SK-N-SH (cell line): ENCODE measurements at regions of chr19 and their contacts with region 1.

Region 1: DNA sequence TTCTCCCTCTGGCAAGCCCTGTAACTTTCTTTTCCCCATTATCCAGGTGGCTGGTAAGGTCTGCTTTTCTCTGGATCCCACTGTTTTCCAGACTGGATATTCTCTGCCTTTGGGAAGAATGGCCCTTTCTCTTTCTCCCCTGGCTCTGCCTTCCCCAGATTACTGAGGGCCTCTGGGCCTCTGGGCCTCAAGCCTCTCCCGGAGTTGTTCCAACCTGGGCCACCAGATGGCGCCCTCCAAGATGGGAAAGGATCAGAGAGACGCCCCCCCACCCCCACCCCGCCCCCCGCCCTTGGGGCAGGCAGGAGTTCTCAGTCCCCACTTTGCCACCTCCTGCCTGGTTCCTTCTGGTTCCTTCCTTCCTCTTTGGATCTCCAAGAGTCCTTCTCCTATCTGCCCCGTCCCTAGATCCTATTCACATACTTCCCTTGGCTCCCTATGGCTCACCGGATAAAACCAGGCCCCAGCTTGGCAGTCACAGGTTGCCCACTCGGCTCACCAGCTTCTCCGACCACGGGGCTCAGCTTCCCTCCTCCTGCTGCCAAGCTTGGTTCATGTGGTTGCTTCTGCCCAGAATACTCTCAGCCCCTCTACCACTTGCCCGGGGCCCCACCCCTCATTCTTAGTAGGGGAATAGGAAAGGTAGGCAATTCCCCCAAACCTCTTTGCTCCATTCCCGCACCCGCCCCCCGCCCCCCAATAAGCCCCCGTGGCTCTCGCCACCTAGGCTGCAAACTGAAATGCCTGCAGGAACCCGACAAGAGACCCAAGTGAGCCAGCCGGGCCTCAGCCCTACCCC is 13.1 kb downstream of the EPS8L1 start:
- DNase-seq: peak; percentile 92
- H3K4me3 ChIP-seq: no peak overlapping the region
- H3K27ac ChIP-seq: no peak overlapping the region; a peak in 1 of 4 replicates
- H3K4me1 ChIP-seq: peaks cover 5 to 18% of the 10 kb centered on the region in 2 experiments; a peak in 1 of 4 replicates
- H3K27me3 ChIP-seq: no peaks in the 10 kb centered on the region
- CTCF ChIP-seq: peak; percentile 63
- EP300 ChIP-seq: no peak
- RAD21 ChIP-seq: peak; percentile 37

Region 2: GRCh38 chr19:55099533-55100506 is 11.1 kb after region 1 on chr19:
- CTCF ChIA-PET with region 1: interaction called, 14 read pairs
- POLR2A ChIA-PET with region 1: no interaction called
- DNase-seq: no peak
- H3K4me3 ChIP-seq: no peak overlapping the region
- H3K27ac ChIP-seq: no peak overlapping the region
- H3K4me1 ChIP-seq: no peaks in the 10 kb centered on the region
- H3K27me3 ChIP-seq: no peaks in the 10 kb centered on the region
- CTCF ChIP-seq: peak; percentile 32
- EP300 ChIP-seq: no peak
- RAD21 ChIP-seq: peak; percentile 28; the same call in 1 of the 2 replicates

Region 3: GRCh38 chr19:55106591-55106990 is 17.8 kb after region 1 on chr19:
- CTCF ChIA-PET with region 1: interaction called, 15 read pairs
- POLR2A ChIA-PET with region 1: no interaction called
- DNase-seq: no peak
- H3K4me3 ChIP-seq: no peak overlapping the region
- H3K27ac ChIP-seq: no peak overlapping the region
- H3K4me1 ChIP-seq: no peaks in the 10 kb centered on the region
- H3K27me3 ChIP-seq: no peaks in the 10 kb centered on the region
- CTCF ChIP-seq: no peak
- EP300 ChIP-seq: no peak
- RAD21 ChIP-seq: no peak

Region 4: GRCh38 chr19:55117636-55118391 is 29.1 kb after region 1 on chr19 and contains the start of gene PPP1R12C:
- CTCF ChIA-PET with region 1: interaction called, 38 read pairs
- POLR2A ChIA-PET with region 1: no interaction called
- DNase-seq: peak; percentile 99
- H3K4me3 ChIP-seq: peak within 1 kb of the TSS; percentile 67 to 87
- H3K27ac ChIP-seq: peak within 1 kb of the TSS; percentile 76 to 82
- H3K4me1 ChIP-seq: peaks cover 9 to 27% of the 10 kb centered on the region in 2 experiments; a peak in 3 of 4 replicates
- H3K27me3 ChIP-seq: peaks cover under 1% of the 10 kb centered on the region; the same call in 1 of the 2 replicates
- CTCF ChIP-seq: no peak
- EP300 ChIP-seq: no peak; a peak in 1 of 4 replicates
- RAD21 ChIP-seq: no peak
- polyA plus RNA-seq, gene PPP1R12C: 83.9 and 87.3 TPM in 2 replicates

Region 5: DNA sequence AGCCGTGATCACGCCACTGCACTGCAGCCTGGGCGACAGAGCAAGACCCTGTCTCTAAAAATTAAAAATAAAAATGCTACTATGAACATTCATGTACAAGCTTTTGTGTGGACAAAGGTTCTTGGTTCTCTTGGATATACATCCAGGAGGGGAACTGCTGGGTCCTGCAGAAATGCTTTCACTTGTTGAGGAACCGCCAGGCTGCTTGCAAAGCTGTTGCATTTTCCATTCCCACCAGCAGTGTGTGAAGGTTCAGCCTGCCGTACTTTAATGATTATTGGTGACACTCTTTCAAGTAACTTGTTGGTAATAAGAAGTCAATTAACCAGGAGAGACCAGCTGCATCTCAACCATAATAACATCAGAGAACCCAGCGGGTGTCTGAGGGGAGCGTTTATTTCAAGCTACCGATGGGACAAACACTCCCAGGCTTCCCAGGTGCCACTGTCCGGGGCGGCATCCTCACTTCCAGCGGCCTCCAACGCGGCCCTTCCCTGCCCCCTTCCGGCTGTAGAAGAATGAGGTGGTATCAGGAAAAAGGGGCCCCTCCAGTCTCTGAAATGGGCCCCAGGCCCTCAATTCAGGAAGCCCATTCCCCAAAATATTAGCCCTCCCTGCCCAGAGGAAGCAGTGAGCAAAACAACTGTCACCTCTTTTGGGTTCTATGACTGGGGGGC is 43.8 kb after region 1 on chr19:
- CTCF ChIA-PET with region 1: interaction called, 37 read pairs
- POLR2A ChIA-PET with region 1: no interaction called
- DNase-seq: peak; percentile 56
- H3K4me3 ChIP-seq: no peak overlapping the region
- H3K27ac ChIP-seq: no peak overlapping the region
- H3K4me1 ChIP-seq: no peaks in the 10 kb centered on the region
- H3K27me3 ChIP-seq: peaks cover 13% of the 10 kb centered on the region; the same call in 1 of the 2 replicates
- CTCF ChIP-seq: peak; percentile 41
- EP300 ChIP-seq: no peak
- RAD21 ChIP-seq: peak; percentile 55

Region 6: GRCh38 chr19:55172741-55173140 is 84.0 kb after region 1 on chr19:
- CTCF ChIA-PET with region 1: no interaction called
- POLR2A ChIA-PET with region 1: no interaction called
- DNase-seq: no peak
- H3K4me3 ChIP-seq: no peak overlapping the region
- H3K27ac ChIP-seq: no peak overlapping the region
- H3K4me1 ChIP-seq: no peaks in the 10 kb centered on the region
- H3K27me3 ChIP-seq: peaks cover 38% of the 10 kb centered on the region; the same call in 1 of the 2 replicates
- CTCF ChIP-seq: no peak
- EP300 ChIP-seq: no peak
- RAD21 ChIP-seq: no peak